Activated T-helper 1 cell treated with anti-CD3 and anti-CD28 coated beads, Interleukin-12 subunit alpha, Interleukin-12 subunit beta, Interleukin-2, Interleukin-4 antibody, amounts not matched to agents 30 ng/mL and 10 ng/mL and 1 ng/mL, durations not matched to agents 14 hours and 24 hours and 36 hours (primary cell): ENCODE measurements at regions of chr7 and their contacts with region 1.

Region 1: DNA sequence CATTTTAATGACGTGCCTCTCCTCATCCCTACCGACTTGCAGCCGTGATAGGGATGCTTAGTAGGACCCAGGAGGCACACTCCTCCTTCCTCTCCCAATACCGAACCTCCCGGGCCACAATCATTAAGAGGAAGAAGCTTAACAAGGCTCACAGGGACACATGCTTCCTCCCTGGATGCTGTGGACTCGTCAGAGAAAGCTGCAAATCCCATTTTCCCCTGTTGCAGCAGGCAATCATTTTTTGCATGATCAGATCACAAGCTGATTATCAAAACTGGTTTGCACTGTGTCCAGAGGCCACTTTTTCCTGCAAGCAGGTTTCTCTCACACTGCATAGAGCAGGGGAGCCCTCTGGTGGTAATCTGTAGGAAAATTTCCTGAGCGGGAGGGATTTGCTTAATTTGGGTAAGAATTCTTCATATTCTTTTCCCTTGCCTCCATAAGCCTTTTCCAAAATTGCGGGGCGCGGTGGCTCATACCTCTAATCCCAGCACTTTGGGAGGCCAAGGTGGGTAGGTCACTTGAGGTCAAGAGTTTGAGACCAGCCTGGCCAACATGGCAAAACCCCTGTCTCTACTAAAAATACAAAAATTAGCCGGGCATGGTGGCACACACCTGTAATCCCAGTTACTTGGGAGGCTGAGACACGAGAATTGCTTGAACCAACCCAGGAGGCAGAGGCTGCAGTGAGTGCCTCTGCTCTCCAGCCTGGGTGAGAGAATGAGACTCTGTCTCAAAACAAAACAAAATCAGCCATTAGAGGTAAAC is 16.1 kb upstream of the LAMB4 start:
- DNase-seq: peak; percentile 32
- H3K4me3 Mint-ChIP-seq: no peak overlapping the region
- H3K27ac Mint-ChIP-seq: no peak overlapping the region
- H3K4me1 Mint-ChIP-seq: no peaks in the 10 kb centered on the region
- H3K27me3 Mint-ChIP-seq: peaks cover 9% of the 10 kb centered on the region

Region 2: DNA sequence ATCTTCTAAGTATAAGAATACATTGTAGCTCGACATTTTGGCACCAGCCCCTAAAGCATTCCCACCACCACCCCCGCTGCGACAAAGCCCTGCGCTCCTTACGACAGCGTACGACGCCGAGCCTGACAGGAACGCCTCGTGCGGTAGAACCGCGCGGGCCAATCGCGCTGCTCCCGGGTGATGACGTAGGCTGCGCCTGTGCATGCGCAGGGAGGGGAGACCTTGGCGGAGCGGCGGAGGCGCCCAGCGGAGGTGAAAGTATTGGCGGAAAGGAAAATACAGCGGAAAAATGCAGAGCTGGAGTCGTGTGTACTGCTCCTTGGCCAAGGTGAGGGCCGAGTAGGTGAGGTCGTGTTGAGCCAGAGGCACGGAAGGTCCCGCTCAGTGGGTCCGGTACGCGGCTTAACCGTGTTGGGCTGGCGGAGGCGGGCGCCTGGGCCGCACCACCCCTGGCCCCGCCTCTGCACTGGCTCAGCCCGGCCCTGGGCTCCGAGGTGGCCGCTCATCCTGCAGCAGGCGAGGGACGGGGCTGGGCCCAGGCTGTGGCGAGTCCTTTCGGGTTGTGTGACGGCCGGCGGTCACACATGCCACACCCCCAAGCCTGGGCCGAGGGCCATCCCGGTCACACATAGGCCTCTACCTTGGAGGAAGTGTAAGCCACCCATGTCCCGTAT is 255.2 kb before region 1 on chr7 and contains the start of gene DLD:
- intact Hi-C with region 1: loop called (anchors 5 kb)
- DNase-seq: peak; percentile 93
- H3K4me3 Mint-ChIP-seq: peak within 1 kb of the TSS; percentile 100
- H3K27ac Mint-ChIP-seq: peak within 1 kb of the TSS; percentile 100
- H3K4me1 Mint-ChIP-seq: peaks cover 49% of the 10 kb centered on the region
- H3K27me3 Mint-ChIP-seq: peaks cover 3% of the 10 kb centered on the region
- total RNA-seq, gene DLD: 98.6 and 114 TPM in 2 replicates

Region 3: DNA sequence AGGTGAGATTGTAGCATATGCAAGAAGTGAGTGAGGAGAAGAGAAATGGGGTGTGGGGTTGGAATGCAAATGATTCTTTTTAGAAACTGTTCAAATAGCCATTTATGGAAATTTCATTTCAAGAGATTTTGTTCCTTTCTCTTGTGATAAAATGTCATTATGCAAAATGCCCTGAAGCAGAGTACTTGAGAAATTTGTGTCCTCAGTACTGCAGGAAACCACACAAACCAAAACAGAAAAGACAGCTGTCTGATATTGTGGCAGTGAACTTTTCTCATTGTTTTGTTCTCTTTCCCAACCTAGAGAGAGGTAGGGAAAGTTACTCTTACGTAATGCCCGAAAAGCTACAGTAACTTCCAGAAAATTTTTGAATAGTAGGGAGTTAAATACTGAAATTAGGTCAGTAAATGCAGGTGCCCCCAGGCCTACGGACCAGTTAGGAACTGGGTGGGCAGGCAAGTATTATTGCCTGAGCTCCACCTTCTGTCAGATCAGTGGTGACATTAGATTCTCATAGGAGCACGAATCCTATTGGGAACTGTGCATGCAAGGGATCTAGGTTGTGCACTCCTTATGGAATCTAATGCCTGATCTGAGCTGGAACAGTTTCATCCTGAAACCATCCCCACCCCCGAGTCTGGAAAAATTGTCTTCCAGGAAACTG is 221.3 kb before region 1 on chr7:
- intact Hi-C with region 1: loop called (anchors 5 kb)
- DNase-seq: no peak
- H3K4me3 Mint-ChIP-seq: no peak overlapping the region
- H3K27ac Mint-ChIP-seq: no peak overlapping the region
- H3K4me1 Mint-ChIP-seq: peaks cover 34% of the 10 kb centered on the region
- H3K27me3 Mint-ChIP-seq: no peaks in the 10 kb centered on the region

Region 4: DNA sequence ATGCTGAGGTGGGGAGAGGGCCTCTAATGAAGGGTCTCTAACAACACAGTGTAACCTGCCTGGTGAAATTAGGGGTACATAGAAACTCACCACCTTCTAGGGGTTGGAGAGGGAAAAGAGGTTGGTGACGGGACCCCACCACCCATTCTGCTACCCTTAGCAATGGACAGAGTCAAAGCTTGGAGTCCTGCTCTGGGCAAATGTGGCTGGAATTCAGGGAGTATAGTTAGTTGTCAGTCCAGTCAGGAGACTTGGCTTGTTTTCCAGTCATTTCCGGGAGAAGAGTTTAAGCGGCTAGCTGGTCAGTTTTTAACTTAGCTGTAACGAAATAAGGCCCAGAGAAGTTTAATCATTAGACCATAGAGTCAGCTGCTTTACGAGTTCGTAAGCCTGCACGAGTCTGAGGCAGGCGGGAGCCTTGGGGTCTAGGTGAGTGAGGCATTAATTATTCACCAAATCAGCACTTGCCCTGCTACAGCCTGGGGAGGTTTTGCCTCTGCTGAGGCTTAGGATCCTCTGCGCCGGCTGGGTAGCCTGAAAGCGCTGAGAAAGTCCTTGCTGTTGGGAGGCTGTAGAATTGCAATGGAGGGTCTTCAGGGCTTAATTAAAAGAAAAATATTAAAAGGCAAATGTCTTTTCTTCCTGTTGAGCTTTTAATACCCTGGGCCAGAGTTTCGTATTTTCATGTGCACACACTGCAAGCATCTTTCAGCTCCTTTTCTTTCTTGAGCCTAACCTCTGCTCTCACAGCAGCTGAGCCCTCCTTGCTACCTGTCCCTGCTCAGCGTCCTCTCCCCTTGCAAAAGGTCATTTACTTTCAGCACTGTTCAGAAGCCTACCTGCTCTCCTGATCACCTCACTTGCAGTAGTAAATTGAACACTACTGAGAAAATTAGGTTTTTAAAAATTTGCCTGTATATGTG is 141.8 kb before region 1 on chr7:
- intact Hi-C with region 1: loop called (anchors 5 kb)
- DNase-seq: no peak
- H3K4me3 Mint-ChIP-seq: peak overlapping the region; percentile 17
- H3K27ac Mint-ChIP-seq: peak overlapping the region; percentile 12
- H3K4me1 Mint-ChIP-seq: no peaks in the 10 kb centered on the region
- H3K27me3 Mint-ChIP-seq: peaks cover 54% of the 10 kb centered on the region

Region 5: GRCh38 chr7:108114117-108114841 is 32.0 kb before region 1 on chr7:
- intact Hi-C with region 1: loop called (anchors 1 kb)
- DNase-seq: no peak
- H3K4me3 Mint-ChIP-seq: no peak overlapping the region
- H3K27ac Mint-ChIP-seq: no peak overlapping the region
- H3K4me1 Mint-ChIP-seq: no peaks in the 10 kb centered on the region
- H3K27me3 Mint-ChIP-seq: peaks cover 16% of the 10 kb centered on the region